ENCODE measurements at regions of chr1 and their contacts with region 1.

Region 1: GRCh38 chr1:86965012-86965826 is 50.8 kb downstream of the HS2ST1 start:
- DNase-seq: peak; percentile 48
- ATAC-seq: peak; percentile 28
- H3K4me3 ChIP-seq: no peak overlapping the region
- H3K4me3 Mint-ChIP-seq: no peak overlapping the region
- H3K27ac ChIP-seq: no peak overlapping the region
- H3K27ac Mint-ChIP-seq: peak overlapping the region; percentile 59
- H3K4me1 ChIP-seq: peaks cover 0 to 9% of the 10 kb centered on the region in 2 donors
- H3K4me1 Mint-ChIP-seq: peaks cover 19% of the 10 kb centered on the region
- H3K27me3 ChIP-seq: no peaks in the 10 kb centered on the region
- H3K27me3 Mint-ChIP-seq: no peaks in the 10 kb centered on the region
- CTCF ChIP-seq: peak; percentile 60

Region 2: DNA sequence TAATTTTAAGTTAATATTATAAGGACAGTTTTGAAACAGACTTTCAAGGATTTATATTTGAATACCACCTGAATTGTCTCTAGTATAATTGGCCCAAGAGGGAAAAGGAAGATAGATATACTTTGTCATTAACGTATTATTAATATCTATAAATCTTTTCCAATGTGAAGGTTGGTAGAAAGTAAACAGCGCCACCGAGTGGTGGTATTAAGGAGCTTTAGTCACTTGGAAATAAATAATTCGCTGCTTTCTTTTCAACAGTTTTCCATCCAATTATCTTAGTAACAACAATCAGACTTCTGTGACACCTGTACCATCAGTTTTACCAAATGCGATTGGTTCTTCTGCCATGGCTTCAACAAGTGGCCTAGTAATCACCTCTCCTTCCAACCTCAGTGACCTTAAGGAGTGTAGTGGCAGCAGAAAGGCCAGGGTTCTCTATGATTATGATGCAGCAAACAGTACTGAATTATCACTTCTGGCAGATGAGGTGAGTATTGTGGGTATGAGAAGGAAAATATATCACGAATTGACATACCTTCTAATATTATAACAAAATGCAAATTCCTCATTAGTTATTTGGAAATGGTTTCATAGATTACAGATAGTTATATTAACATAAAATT is 223.2 kb before region 1 on chr1:
- CTCF ChIA-PET with region 1: no interaction called
- POLR2A ChIA-PET with region 1: no interaction called
- intact Hi-C with region 1: loop called (anchors 10 kb)
- DNase-seq: peak; percentile 50
- ATAC-seq: no peak
- H3K4me3 ChIP-seq: no peak overlapping the region
- H3K4me3 Mint-ChIP-seq: no peak overlapping the region
- H3K27ac ChIP-seq: no peak overlapping the region
- H3K27ac Mint-ChIP-seq: no peak overlapping the region
- H3K4me1 ChIP-seq: peaks cover 7 to 10% of the 10 kb centered on the region in 2 donors
- H3K4me1 Mint-ChIP-seq: no peaks in the 10 kb centered on the region
- H3K27me3 ChIP-seq: no peaks in the 10 kb centered on the region
- H3K27me3 Mint-ChIP-seq: no peaks in the 10 kb centered on the region
- CTCF ChIP-seq: peak; percentile 88

Region 3: DNA sequence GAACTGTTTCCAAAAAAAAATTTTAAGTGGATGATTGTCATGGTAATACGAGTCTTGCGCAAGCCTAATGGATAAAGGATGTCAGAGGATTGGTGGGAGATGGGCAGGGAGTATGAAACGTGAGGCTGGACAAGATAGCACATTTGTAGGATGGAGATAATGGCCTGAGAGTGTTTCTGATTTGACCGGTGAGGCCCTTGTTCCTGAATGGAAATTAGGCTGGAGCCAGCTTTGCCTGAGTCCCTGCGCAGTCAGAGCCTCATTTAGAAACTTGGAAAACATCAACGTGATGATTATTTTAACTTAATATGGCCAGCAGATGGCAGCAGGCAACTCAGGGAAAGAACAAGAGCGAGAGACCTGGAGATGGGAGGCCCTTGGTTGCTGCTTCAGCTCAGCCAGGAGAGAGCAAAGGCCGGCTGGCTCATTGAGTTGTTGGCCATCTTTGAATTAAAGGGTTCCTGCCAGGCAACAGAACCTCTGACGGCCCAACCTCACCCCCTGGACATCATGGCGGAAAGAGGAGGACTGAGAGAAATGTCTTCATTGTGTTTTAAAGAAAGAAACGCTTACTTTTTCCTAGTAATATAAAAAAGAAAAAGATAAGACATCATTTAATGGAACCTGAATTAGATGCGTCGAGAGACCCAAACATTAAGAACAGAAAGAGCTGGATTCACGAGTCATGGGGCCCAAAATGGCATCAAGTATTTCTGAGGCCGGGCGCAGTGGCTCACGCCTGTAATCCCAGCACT is 131.6 kb before region 1 on chr1:
- CTCF ChIA-PET with region 1: interaction called, 31 read pairs
- POLR2A ChIA-PET with region 1: interaction called, 5 read pairs
- intact Hi-C with region 1: loop called (anchors 1 kb)
- DNase-seq: peak; percentile 81
- ATAC-seq: peak; percentile 70
- H3K4me3 ChIP-seq: no peak overlapping the region
- H3K4me3 Mint-ChIP-seq: no peak overlapping the region
- H3K27ac ChIP-seq: no peak overlapping the region
- H3K27ac Mint-ChIP-seq: no peak overlapping the region
- H3K4me1 ChIP-seq: peaks cover 0 to 5% of the 10 kb centered on the region in 2 donors
- H3K4me1 Mint-ChIP-seq: peaks cover 5% of the 10 kb centered on the region
- H3K27me3 ChIP-seq: no peaks in the 10 kb centered on the region
- H3K27me3 Mint-ChIP-seq: no peaks in the 10 kb centered on the region
- CTCF ChIP-seq: peak; percentile 76

Region 4: GRCh38 chr1:86906419-86906818 is 58.8 kb before region 1 on chr1:
- CTCF ChIA-PET with region 1: no interaction called
- POLR2A ChIA-PET with region 1: no interaction called
- intact Hi-C with region 1: no loop called
- DNase-seq: no peak
- ATAC-seq: no peak
- H3K4me3 ChIP-seq: no peak overlapping the region
- H3K4me3 Mint-ChIP-seq: no peak overlapping the region
- H3K27ac ChIP-seq: peak overlapping the region in 1 of 2 donors; percentile 48
- H3K27ac Mint-ChIP-seq: no peak overlapping the region
- H3K4me1 ChIP-seq: peaks cover 25 to 54% of the 10 kb centered on the region in 2 donors
- H3K4me1 Mint-ChIP-seq: peaks cover 49% of the 10 kb centered on the region
- H3K27me3 ChIP-seq: no peaks in the 10 kb centered on the region
- H3K27me3 Mint-ChIP-seq: no peaks in the 10 kb centered on the region
- CTCF ChIP-seq: no peak

Region 5: DNA sequence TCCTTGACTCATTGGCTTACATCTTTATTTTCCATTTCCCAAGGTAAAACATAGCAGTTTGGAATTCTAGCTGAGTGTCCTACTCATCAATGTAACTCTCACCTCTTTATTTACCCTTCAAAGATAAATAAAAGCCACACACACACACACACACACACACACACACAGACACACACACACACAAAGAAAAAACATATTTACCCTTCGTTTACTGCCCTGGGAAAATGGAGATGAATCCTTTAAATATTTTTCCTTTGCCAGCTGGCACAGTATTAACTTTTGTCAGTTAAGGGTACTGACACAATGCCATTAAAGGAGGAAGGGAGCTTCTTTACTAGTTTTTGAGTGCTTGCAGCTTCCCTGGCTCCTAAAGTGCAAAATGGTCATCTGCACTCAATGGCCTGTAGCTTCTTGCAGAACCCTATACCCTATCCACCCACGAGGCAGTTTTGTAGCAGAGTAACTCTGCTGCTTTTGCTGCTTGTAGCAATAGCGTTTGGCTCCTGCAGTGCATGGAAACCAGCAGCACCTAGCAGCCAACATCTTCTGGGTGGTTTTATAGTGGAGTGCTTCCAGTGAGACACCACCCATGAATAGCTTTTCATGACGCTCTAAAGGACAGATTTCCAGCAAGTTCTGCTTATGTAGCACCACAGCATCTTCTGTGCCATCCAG is 52.9 kb after region 1 on chr1:
- CTCF ChIA-PET with region 1: no interaction called
- POLR2A ChIA-PET with region 1: no interaction called
- intact Hi-C with region 1: no loop called
- DNase-seq: no peak
- ATAC-seq: no peak
- H3K4me3 ChIP-seq: no peak overlapping the region
- H3K4me3 Mint-ChIP-seq: no peak overlapping the region
- H3K27ac ChIP-seq: no peak overlapping the region
- H3K27ac Mint-ChIP-seq: no peak overlapping the region
- H3K4me1 ChIP-seq: no peaks in the 10 kb centered on the region
- H3K4me1 Mint-ChIP-seq: peaks cover 12% of the 10 kb centered on the region
- H3K27me3 ChIP-seq: no peaks in the 10 kb centered on the region
- H3K27me3 Mint-ChIP-seq: no peaks in the 10 kb centered on the region
- CTCF ChIP-seq: no peak

Region 6: GRCh38 chr1:87252406-87252805 is 287.2 kb after region 1 on chr1:
- CTCF ChIA-PET with region 1: no interaction called
- POLR2A ChIA-PET with region 1: no interaction called
- intact Hi-C with region 1: no loop called
- DNase-seq: no peak
- ATAC-seq: no peak
- H3K4me3 ChIP-seq: no peak overlapping the region
- H3K4me3 Mint-ChIP-seq: no peak overlapping the region
- H3K27ac ChIP-seq: no peak overlapping the region
- H3K27ac Mint-ChIP-seq: no peak overlapping the region
- H3K4me1 ChIP-seq: no peaks in the 10 kb centered on the region
- H3K4me1 Mint-ChIP-seq: no peaks in the 10 kb centered on the region
- H3K27me3 ChIP-seq: peaks cover 0 to 8% (median 0%) of the 10 kb centered on the region in 4 experiments
- H3K27me3 Mint-ChIP-seq: peaks cover 43% of the 10 kb centered on the region
- CTCF ChIP-seq: no peak